ENCODE measurements at regions of chr20 and their contacts with region 1.

Region 1: GRCh38 chr20:58087193-58087858 is 141.1 kb downstream of the ANKRD60 start:
- DNase-seq: peak; percentile 76
- H3K4me3 ChIP-seq: no peak overlapping the region; a peak in 1 of 4 replicates
- H3K27ac ChIP-seq: peak overlapping the region in 1 of 2 experiments; percentile 28; a peak in 1 of 4 replicates
- H3K4me1 ChIP-seq: no peaks in the 10 kb centered on the region; a peak in 2 of 4 replicates
- H3K27me3 ChIP-seq: no peaks in the 10 kb centered on the region
- CTCF ChIP-seq: peak; percentile 90
- EP300 ChIP-seq: no peak
- RAD21 ChIP-seq: peak; percentile 92

Region 2: GRCh38 chr20:57810511-57811373 is 276.6 kb before region 1 on chr20:
- CTCF ChIA-PET with region 1: interaction called, 10 read pairs
- POLR2A ChIA-PET with region 1: interaction called, 3 read pairs
- DNase-seq: no peak
- H3K4me3 ChIP-seq: no peak overlapping the region
- H3K27ac ChIP-seq: no peak overlapping the region; a peak in 1 of 4 replicates
- H3K4me1 ChIP-seq: peaks cover 0 to 49% of the 10 kb centered on the region in 2 experiments; a peak in 1 of 4 replicates
- H3K27me3 ChIP-seq: no peaks in the 10 kb centered on the region
- CTCF ChIP-seq: no peak
- EP300 ChIP-seq: no peak
- RAD21 ChIP-seq: no peak

Region 3: DNA sequence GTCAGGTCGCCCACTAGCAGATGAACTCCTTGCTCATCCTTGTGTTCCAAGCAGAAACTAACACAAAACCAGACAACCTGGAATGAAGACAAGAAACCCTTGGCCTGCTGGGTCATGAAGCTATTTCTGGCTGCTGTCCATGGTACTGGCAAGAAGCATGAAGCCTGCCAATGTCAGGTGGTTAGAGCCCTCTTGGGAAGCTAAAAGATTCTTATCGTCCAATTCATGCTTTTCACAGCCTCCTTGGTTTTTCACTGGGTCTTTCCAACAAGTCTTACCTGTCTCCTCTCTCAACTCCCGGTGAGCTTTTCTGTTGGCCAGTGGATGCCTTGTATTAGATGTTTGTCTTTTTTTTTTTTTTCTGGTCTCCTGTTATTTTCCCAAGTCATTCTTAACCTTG is 39.2 kb before region 1 on chr20:
- CTCF ChIA-PET with region 1: interaction called, 26 read pairs
- POLR2A ChIA-PET with region 1: no interaction called
- DNase-seq: no peak
- H3K4me3 ChIP-seq: no peak overlapping the region
- H3K27ac ChIP-seq: peak overlapping the region in 1 of 2 experiments; percentile 99; a peak in 2 of 4 replicates
- H3K4me1 ChIP-seq: peaks cover 11 to 52% of the 10 kb centered on the region in 2 experiments
- H3K27me3 ChIP-seq: no peaks in the 10 kb centered on the region
- CTCF ChIP-seq: no peak
- EP300 ChIP-seq: no peak
- RAD21 ChIP-seq: no peak

Region 4: DNA sequence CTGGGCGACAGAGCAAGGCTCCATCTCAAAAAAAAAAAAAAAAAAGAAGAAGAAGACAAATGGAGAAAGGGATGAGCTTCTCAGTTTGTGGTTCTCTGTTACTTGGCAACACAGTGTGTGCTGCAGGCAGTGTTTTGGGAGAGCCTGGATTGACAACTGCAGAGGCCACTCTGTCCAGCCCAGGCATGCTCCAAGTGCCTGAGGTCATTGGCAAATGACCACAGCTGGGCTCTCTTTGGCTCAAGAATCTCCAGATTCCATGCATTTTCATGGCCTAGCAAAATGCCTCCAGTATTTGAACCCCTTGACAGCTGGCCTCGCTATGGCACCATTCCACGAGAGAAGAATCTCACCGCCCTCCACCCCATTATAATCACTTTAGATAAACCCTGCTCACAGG is 14.9 kb after region 1 on chr20:
- CTCF ChIA-PET with region 1: interaction called, 52 read pairs
- POLR2A ChIA-PET with region 1: no interaction called
- DNase-seq: peak; percentile 36
- H3K4me3 ChIP-seq: no peak overlapping the region
- H3K27ac ChIP-seq: no peak overlapping the region
- H3K4me1 ChIP-seq: peaks cover 0 to 8% of the 10 kb centered on the region in 2 experiments; a peak in 1 of 4 replicates
- H3K27me3 ChIP-seq: no peaks in the 10 kb centered on the region
- CTCF ChIP-seq: no peak
- EP300 ChIP-seq: no peak
- RAD21 ChIP-seq: no peak

Region 5: GRCh38 chr20:58179432-58180099 is 92.2 kb after region 1 on chr20:
- CTCF ChIA-PET with region 1: interaction called, 20 read pairs
- POLR2A ChIA-PET with region 1: no interaction called
- DNase-seq: peak; percentile 92
- H3K4me3 ChIP-seq: peak overlapping the region; percentile 36 to 41; a peak in 3 of 4 replicates
- H3K27ac ChIP-seq: peak overlapping the region in 1 of 2 experiments; percentile 58; a peak in 1 of 4 replicates
- H3K4me1 ChIP-seq: peaks cover 0 to 47% of the 10 kb centered on the region in 2 experiments; a peak in 2 of 4 replicates
- H3K27me3 ChIP-seq: no peaks in the 10 kb centered on the region
- CTCF ChIP-seq: peak; percentile 95
- EP300 ChIP-seq: no peak
- RAD21 ChIP-seq: peak; percentile 92

Region 6: GRCh38 chr20:58202044-58202443 is 114.7 kb after region 1 on chr20:
- CTCF ChIA-PET with region 1: no interaction called
- POLR2A ChIA-PET with region 1: no interaction called
- DNase-seq: no peak
- H3K4me3 ChIP-seq: no peak overlapping the region
- H3K27ac ChIP-seq: no peak overlapping the region
- H3K4me1 ChIP-seq: no peaks in the 10 kb centered on the region; a peak in 1 of 4 replicates
- H3K27me3 ChIP-seq: no peaks in the 10 kb centered on the region
- CTCF ChIP-seq: no peak
- EP300 ChIP-seq: no peak
- RAD21 ChIP-seq: no peak

Measured in SK-N-SH (cell line).